Naive thymus-derived CD8-positive, alpha-beta T cell (primary cell): ENCODE measurements at regions of chr2 and their contacts with region 1.

Region 1: GRCh38 chr2:239318790-239319661 is 81.8 kb downstream of the HDAC4 start:
- DNase-seq: peak in 1 of 10 donors; percentile 55
- ATAC-seq: no peak
- H3K4me3 Mint-ChIP-seq: peak overlapping the region; percentile 69 to 97 (median 87)
- H3K27ac Mint-ChIP-seq: peak overlapping the region; percentile 92 to 99 (median 97)
- H3K4me1 Mint-ChIP-seq: peaks cover 25 to 80% (median 64%) of the 10 kb centered on the region in 4 donors
- H3K27me3 Mint-ChIP-seq: no peaks in the 10 kb centered on the region

Region 2: DNA sequence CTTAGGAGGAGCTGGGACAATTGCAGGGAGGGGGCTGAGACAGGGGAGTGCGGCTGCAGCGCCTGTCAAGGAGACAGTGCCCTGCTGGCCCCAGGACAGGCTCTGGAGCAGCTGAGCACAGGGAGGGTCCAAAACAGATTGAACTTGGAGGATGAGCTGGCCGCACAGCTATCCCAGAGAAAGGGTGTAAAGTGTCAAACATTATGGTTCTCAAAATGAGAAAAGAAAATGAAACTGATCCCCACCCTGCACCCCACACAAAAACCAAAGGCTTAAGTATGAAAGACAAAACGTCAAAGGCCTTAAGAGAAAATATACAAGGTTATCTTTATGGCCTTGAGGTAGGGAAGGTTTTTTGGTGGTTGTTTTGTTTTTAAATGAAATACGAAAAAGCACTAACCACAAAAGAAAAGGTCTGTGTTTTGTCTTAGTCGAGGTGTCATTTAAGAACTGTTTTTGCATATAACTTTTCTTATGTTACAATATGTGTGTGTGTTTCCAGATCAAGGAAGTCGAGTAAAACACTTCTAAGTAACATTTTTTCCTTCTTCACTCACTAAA is 30.0 kb before region 1 on chr2:
- POLR2A ChIA-PET with region 1: interaction called, 98 read pairs
- DNase-seq: peak in 7 of 10 donors; percentile 34 to 88 (median 52)
- ATAC-seq: peak; percentile 73 to 75
- H3K4me3 Mint-ChIP-seq: peak overlapping the region; percentile 64 to 87 (median 82)
- H3K27ac Mint-ChIP-seq: peak overlapping the region; percentile 91 to 100 (median 98)
- H3K4me1 Mint-ChIP-seq: peaks cover 42 to 90% (median 79%) of the 10 kb centered on the region in 4 donors
- H3K27me3 Mint-ChIP-seq: no peaks in the 10 kb centered on the region

Region 3: GRCh38 chr2:239303711-239304532 is 15.1 kb before region 1 on chr2:
- POLR2A ChIA-PET with region 1: interaction called, 98 read pairs
- DNase-seq: no peak
- ATAC-seq: peak in 1 of 2 donors; percentile 26
- H3K4me3 Mint-ChIP-seq: peak overlapping the region in 7 of 10 donors; percentile 6 to 81 (median 45)
- H3K27ac Mint-ChIP-seq: peak overlapping the region; percentile 40 to 95 (median 91)
- H3K4me1 Mint-ChIP-seq: peaks cover 35 to 59% (median 52%) of the 10 kb centered on the region in 4 donors
- H3K27me3 Mint-ChIP-seq: no peaks in the 10 kb centered on the region

Region 4: DNA sequence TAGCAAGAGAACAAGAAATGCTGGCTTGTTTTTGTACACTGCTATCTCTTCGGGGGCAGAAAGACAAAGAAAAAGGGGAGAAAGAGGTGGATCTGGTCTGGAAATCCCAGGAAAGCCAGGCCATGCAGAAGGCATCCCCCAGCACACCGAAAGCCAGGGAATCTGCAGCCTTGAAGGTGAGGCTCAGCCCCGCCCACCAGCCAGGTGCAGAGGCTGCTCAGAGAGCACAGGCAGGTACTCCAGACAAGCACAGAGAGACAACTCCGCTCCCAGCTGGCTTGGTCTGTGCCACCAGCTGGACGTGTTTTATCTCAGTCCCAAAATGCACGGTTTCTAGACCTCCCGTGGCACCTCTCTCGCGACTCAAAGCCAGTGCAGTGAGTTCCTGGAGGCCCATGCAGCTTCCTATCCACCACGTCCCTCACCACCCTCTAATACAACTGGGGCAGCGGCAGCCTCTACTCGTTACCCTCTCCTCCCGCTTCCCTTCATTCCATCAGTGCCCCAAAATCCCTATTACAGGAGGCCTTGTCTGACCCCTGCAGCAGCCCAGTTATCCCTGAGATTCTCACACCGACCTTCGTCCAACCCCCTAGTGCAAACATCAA is 19.0 kb after region 1 on chr2:
- POLR2A ChIA-PET with region 1: no interaction called
- DNase-seq: no peak
- ATAC-seq: no peak
- H3K4me3 Mint-ChIP-seq: no peak overlapping the region
- H3K27ac Mint-ChIP-seq: peak overlapping the region in 2 of 10 donors; percentile 4 to 69
- H3K4me1 Mint-ChIP-seq: peaks cover 17 to 37% (median 35%) of the 10 kb centered on the region in 4 donors
- H3K27me3 Mint-ChIP-seq: no peaks in the 10 kb centered on the region

Region 5: GRCh38 chr2:239362507-239362906 is 43.5 kb after region 1 on chr2:
- POLR2A ChIA-PET with region 1: no interaction called
- DNase-seq: no peak
- ATAC-seq: no peak
- H3K4me3 Mint-ChIP-seq: peak overlapping the region in 1 of 10 donors; percentile 4
- H3K27ac Mint-ChIP-seq: peak overlapping the region in 1 of 10 donors; percentile 76
- H3K4me1 Mint-ChIP-seq: peaks cover 21 to 49% (median 27%) of the 10 kb centered on the region in 4 donors
- H3K27me3 Mint-ChIP-seq: no peaks in the 10 kb centered on the region